CD4-positive, alpha-beta T cell (primary cell): ENCODE measurements at regions of chr15 and their contacts with region 1.

Region 1: DNA sequence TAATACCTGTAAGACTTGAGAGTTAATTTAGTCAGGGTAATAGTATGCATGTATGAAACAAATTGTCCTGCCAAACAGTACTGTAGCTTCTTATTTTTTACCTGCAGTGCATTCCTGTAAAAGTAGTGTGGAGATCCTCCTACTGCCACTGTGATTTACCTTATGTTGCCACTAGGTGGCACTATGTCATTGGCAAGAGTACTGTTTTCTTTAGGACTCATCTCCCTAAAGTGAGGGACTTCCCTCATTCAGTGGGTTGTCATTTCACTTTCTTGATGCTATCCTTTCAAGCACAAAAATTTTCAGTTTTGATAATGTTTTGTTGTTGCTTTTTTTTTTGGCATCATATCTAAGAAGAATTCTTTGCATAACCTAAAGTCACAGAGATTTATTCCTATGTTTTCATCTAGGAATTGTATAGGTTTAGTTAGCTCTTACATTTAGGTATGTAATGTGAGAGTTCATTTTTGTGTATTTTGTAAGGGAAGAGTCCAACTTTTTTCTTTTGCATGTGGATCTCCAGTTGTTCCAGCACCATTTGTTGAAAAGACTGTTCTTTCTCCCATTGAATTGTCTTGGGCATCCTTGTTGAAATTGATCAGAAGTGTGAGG is 105.7 kb downstream of the AKAP13 start:
- DNase-seq: peak in 12 of 14 experiments; percentile 3 to 86 (median 46)
- ATAC-seq: peak; percentile 91
- H3K4me3 ChIP-seq: no peak overlapping the region
- H3K4me3 Mint-ChIP-seq: no peak overlapping the region
- H3K27ac ChIP-seq: no peak overlapping the region
- H3K27ac Mint-ChIP-seq: no peak overlapping the region
- H3K4me1 ChIP-seq: peaks cover 9% of the 10 kb centered on the region
- H3K4me1 Mint-ChIP-seq: peaks cover 69% of the 10 kb centered on the region
- H3K27me3 ChIP-seq: no peaks in the 10 kb centered on the region
- H3K27me3 Mint-ChIP-seq: no peaks in the 10 kb centered on the region
- CTCF ChIP-seq: peak; percentile 98

Region 2: GRCh38 chr15:85563328-85563727 is 77.3 kb after region 1 on chr15:
- CTCF ChIA-PET with region 1: no interaction called
- POLR2A ChIA-PET with region 1: no interaction called
- intact Hi-C with region 1: no loop called
- DNase-seq: no peak
- ATAC-seq: no peak
- H3K4me3 ChIP-seq: no peak overlapping the region
- H3K4me3 Mint-ChIP-seq: no peak overlapping the region
- H3K27ac ChIP-seq: no peak overlapping the region
- H3K27ac Mint-ChIP-seq: no peak overlapping the region
- H3K4me1 ChIP-seq: peaks cover 2% of the 10 kb centered on the region
- H3K4me1 Mint-ChIP-seq: peaks cover 22% of the 10 kb centered on the region
- H3K27me3 ChIP-seq: no peaks in the 10 kb centered on the region
- H3K27me3 Mint-ChIP-seq: no peaks in the 10 kb centered on the region
- CTCF ChIP-seq: no peak

Region 3: GRCh38 chr15:85707519-85708338 is 221.7 kb after region 1 on chr15:
- CTCF ChIA-PET with region 1: no interaction called
- POLR2A ChIA-PET with region 1: no interaction called
- intact Hi-C with region 1: loop called in 1 of 2 experiments (anchors 5 kb)
- DNase-seq: peak in 2 of 14 experiments; percentile 56 to 80
- ATAC-seq: peak; percentile 39
- H3K4me3 ChIP-seq: peak overlapping the region; percentile 45
- H3K4me3 Mint-ChIP-seq: peak overlapping the region; percentile 75
- H3K27ac ChIP-seq: peak overlapping the region; percentile 80 to 88
- H3K27ac Mint-ChIP-seq: peak overlapping the region; percentile 98
- H3K4me1 ChIP-seq: peaks cover 54% of the 10 kb centered on the region
- H3K4me1 Mint-ChIP-seq: peaks cover 87% of the 10 kb centered on the region
- H3K27me3 ChIP-seq: no peaks in the 10 kb centered on the region
- H3K27me3 Mint-ChIP-seq: no peaks in the 10 kb centered on the region
- CTCF ChIP-seq: no peak

Region 4: GRCh38 chr15:85723960-85724945 is 238.2 kb after region 1 on chr15:
- CTCF ChIA-PET with region 1: no interaction called
- POLR2A ChIA-PET with region 1: no interaction called
- intact Hi-C with region 1: loop called in 1 of 2 experiments (anchors 5 kb)
- DNase-seq: peak in 3 of 14 experiments; percentile 50 to 75 (median 59)
- ATAC-seq: peak; percentile 71
- H3K4me3 ChIP-seq: no peak overlapping the region
- H3K4me3 Mint-ChIP-seq: peak overlapping the region; percentile 72
- H3K27ac ChIP-seq: peak overlapping the region; percentile 63 to 76
- H3K27ac Mint-ChIP-seq: peak overlapping the region; percentile 92
- H3K4me1 ChIP-seq: peaks cover 16% of the 10 kb centered on the region
- H3K4me1 Mint-ChIP-seq: peaks cover 45% of the 10 kb centered on the region
- H3K27me3 ChIP-seq: no peaks in the 10 kb centered on the region
- H3K27me3 Mint-ChIP-seq: no peaks in the 10 kb centered on the region
- CTCF ChIP-seq: no peak

Region 5: DNA sequence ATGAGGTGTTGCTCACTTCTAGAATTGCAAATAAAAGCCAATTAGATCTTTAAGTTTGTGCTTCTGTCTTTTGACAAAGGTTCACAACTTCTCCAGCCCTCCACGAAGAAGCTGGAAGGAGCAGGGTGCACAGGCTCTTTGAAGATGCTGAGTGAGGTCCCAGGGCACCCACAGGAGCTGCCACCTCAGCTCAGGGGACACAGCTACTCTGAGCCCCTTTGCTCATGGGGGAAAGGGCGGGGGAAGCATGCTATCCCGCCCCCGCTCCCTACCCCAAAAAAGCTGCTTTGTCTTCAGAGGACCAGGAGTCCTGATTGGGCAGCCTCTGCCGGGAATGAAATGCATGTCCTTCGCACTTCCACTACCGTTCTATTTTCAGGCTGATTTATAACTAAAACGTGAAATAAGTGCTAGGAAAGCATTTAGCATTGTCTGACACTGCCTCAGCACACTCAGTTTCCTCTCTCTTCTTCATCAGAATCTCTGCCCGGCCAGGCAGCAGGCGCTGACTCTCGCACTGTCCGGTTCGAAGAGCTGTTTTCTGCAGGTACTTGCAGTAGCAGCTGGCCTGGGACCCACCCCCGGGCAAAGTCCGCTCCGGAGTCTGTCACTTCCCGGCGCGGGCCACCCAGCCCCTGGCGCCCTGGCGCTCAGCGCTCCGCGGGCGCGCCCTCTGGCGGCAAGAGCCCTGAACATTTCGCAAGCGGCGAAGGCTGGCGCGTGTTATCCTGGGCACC is 354.2 kb after region 1 on chr15:
- CTCF ChIA-PET with region 1: no interaction called
- POLR2A ChIA-PET with region 1: no interaction called
- intact Hi-C with region 1: loop called (anchors 1 to 5 kb)
- DNase-seq: peak; percentile 56 to 88 (median 74)
- ATAC-seq: peak; percentile 96
- H3K4me3 ChIP-seq: peak overlapping the region; percentile 33
- H3K4me3 Mint-ChIP-seq: peak overlapping the region; percentile 54
- H3K27ac ChIP-seq: no peak overlapping the region
- H3K27ac Mint-ChIP-seq: no peak overlapping the region
- H3K4me1 ChIP-seq: peaks cover 10% of the 10 kb centered on the region
- H3K4me1 Mint-ChIP-seq: no peaks in the 10 kb centered on the region
- H3K27me3 ChIP-seq: no peaks in the 10 kb centered on the region
- H3K27me3 Mint-ChIP-seq: peaks cover 17% of the 10 kb centered on the region
- CTCF ChIP-seq: peak; percentile 97